ENCODE measurements at regions of chr5 and their contacts with region 1.

Region 1: DNA sequence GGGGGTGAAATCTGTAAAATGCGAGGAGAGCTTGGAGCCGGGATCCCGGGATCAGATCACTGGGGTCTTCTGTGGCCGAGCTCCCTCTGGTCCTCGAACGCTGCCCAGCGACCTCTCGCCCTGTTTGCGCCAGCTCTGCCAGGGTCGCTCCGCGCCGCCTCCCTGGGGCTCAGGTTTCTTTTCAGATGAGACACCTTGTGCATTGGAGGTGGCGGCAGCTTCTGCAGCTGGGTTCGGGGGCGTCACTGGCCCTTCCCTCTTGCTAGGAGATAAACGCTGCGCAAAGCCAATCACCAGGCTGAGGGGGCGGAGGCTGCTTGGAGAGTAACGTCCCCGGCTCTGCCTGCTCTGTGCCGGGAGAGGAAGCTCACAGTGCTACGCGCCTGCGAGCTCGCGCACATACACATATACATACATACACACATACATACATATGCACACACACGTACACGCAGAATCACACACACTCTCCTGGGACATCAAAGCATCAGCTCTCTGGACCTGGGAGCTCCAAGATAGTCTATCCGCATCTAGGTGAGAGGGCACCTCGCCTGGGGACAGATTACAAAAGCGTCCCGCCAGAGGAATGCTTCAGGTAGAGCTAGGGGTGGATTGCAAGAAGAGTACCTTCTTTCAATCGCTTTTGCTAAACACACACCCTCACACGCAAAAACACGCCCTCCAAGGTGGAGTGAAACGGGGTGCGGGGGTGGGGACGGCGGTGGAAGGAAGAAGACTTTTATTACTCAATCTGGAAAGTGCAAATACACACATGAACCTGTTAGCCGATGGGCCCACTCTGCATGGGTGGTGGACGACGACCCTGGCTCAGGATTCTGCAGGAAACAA is at the start of gene ST8SIA4:
- DNase-seq: peak; percentile 95
- H3K4me3 Mint-ChIP-seq: peak within 1 kb of the TSS; percentile 92
- H3K27ac Mint-ChIP-seq: peak within 1 kb of the TSS; percentile 96
- H3K4me1 Mint-ChIP-seq: peaks cover 30% of the 10 kb centered on the region
- H3K27me3 Mint-ChIP-seq: no peaks in the 10 kb centered on the region
- total RNA-seq, gene ST8SIA4: 32.8 to 35.1 TPM

Region 2: DNA sequence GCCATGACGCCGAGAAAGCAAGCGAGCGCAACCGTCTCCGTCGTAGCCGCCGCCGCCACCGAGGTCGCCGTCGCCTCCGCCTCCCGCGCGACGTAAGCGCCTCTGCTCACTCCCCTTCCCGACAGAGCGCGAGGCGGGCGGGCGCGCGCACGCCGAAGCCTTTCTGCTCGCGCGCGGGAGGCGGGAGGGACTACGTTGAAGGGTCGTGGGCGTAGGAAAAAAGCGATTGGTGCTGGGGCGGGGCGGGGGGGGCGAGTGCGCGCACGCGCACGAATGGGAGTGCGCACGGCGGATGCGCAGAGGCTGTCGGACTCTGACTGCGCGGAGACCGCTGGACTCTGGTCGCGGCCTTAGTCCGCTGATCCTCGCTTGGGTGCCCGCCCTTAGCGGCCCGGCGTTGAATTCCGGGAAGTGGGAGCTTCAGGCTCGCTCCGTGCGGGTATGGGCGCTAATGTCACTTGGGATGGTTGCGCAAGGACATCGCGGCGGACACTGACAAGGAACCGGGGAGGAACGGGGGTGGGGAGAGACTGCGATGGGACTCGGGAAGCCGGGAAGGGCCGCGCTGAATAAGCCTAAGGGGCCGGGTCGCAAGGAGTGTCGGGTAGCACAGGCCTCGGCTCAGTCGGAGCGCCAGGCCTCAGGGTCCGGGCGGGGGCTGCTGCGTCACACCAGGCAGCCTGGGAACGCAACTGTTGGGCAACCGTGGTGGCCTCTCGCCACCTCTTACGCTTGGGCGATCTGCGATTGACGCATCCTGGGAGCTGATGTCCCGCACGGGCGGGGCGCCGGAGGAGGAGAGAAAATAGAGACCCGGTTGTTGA is 1974.2 kb before region 1 on chr5 and contains the start of gene CHD1:
- CTCF ChIA-PET with region 1: no interaction called
- POLR2A ChIA-PET with region 1: no interaction called
- intact Hi-C with region 1: loop called (anchors 2 kb)
- DNase-seq: peak; percentile 97
- H3K4me3 Mint-ChIP-seq: peak within 1 kb of the TSS; percentile 99
- H3K27ac Mint-ChIP-seq: peak within 1 kb of the TSS; percentile 100
- H3K4me1 Mint-ChIP-seq: peaks cover 55% of the 10 kb centered on the region
- H3K27me3 Mint-ChIP-seq: no peaks in the 10 kb centered on the region
- total RNA-seq, gene CHD1: 50.1 to 53.4 TPM

Region 3: GRCh38 chr5:100623719-100624118 is 279.5 kb before region 1 on chr5:
- CTCF ChIA-PET with region 1: interaction called, 4 read pairs
- POLR2A ChIA-PET with region 1: no interaction called
- intact Hi-C with region 1: loop called (anchors 5 kb)
- DNase-seq: no peak
- H3K4me3 Mint-ChIP-seq: no peak overlapping the region
- H3K27ac Mint-ChIP-seq: no peak overlapping the region
- H3K4me1 Mint-ChIP-seq: no peaks in the 10 kb centered on the region
- H3K27me3 Mint-ChIP-seq: no peaks in the 10 kb centered on the region

Region 4: GRCh38 chr5:100676817-100677684 is 226.2 kb before region 1 on chr5:
- CTCF ChIA-PET with region 1: no interaction called
- POLR2A ChIA-PET with region 1: no interaction called
- intact Hi-C with region 1: no loop called
- DNase-seq: no peak
- H3K4me3 Mint-ChIP-seq: no peak overlapping the region
- H3K27ac Mint-ChIP-seq: no peak overlapping the region
- H3K4me1 Mint-ChIP-seq: no peaks in the 10 kb centered on the region
- H3K27me3 Mint-ChIP-seq: no peaks in the 10 kb centered on the region

Region 5: GRCh38 chr5:100777680-100778281 is 125.5 kb before region 1 on chr5:
- CTCF ChIA-PET with region 1: interaction called, 7 read pairs
- POLR2A ChIA-PET with region 1: interaction called, 10 read pairs
- intact Hi-C with region 1: loop called (anchors 1 kb)
- DNase-seq: peak; percentile 34
- H3K4me3 Mint-ChIP-seq: no peak overlapping the region
- H3K27ac Mint-ChIP-seq: peak overlapping the region; percentile 71
- H3K4me1 Mint-ChIP-seq: peaks cover 36% of the 10 kb centered on the region
- H3K27me3 Mint-ChIP-seq: no peaks in the 10 kb centered on the region

Region 6: GRCh38 chr5:100852988-100853449 is 50.2 kb before region 1 on chr5:
- CTCF ChIA-PET with region 1: interaction called, 3 read pairs
- POLR2A ChIA-PET with region 1: interaction called, 96 read pairs
- intact Hi-C with region 1: loop called (anchors 1 kb)
- DNase-seq: no peak
- H3K4me3 Mint-ChIP-seq: peak overlapping the region; percentile 69
- H3K27ac Mint-ChIP-seq: peak overlapping the region; percentile 95
- H3K4me1 Mint-ChIP-seq: peaks cover 40% of the 10 kb centered on the region
- H3K27me3 Mint-ChIP-seq: no peaks in the 10 kb centered on the region

Region 7: GRCh38 chr5:100890461-100891008 is 12.7 kb before region 1 on chr5:
- CTCF ChIA-PET with region 1: interaction called, 10 read pairs
- POLR2A ChIA-PET with region 1: interaction called, 36 read pairs
- intact Hi-C with region 1: loop called (anchors 1 kb)
- DNase-seq: no peak
- H3K4me3 Mint-ChIP-seq: peak overlapping the region; percentile 62
- H3K27ac Mint-ChIP-seq: peak overlapping the region; percentile 86
- H3K4me1 Mint-ChIP-seq: peaks cover 56% of the 10 kb centered on the region
- H3K27me3 Mint-ChIP-seq: no peaks in the 10 kb centered on the region

Region 8: DNA sequence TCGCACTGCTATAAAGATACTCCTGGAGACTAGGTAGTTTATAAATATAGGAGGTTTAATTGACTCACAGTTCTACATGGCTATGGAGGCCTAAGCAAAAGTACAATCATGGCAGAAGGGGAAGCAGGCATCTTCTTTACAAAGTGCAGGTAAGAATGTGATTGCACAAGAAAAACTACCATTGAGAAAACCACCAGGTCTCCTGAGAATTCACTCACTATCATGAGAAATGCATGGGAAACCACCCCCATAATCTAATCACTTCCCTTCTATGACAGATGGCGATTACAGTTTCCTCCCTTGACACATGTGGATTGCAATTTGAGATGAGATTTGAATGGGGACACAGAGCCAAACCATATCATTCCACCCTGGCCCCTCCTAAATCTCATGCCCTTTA is 121.0 kb after region 1 on chr5:
- CTCF ChIA-PET with region 1: no interaction called
- POLR2A ChIA-PET with region 1: no interaction called
- intact Hi-C with region 1: no loop called
- DNase-seq: no peak
- H3K4me3 Mint-ChIP-seq: no peak overlapping the region
- H3K27ac Mint-ChIP-seq: no peak overlapping the region
- H3K4me1 Mint-ChIP-seq: no peaks in the 10 kb centered on the region
- H3K27me3 Mint-ChIP-seq: no peaks in the 10 kb centered on the region

Measured in activated CD4-positive, alpha-beta memory T cell treated with anti-CD3 and anti-CD28 coated beads for 36 hours (primary cell).